Left cardiac atrium (tissue), 4 donors: ENCODE measurements at regions of chr1 and their contacts with region 1.

Region 1: DNA sequence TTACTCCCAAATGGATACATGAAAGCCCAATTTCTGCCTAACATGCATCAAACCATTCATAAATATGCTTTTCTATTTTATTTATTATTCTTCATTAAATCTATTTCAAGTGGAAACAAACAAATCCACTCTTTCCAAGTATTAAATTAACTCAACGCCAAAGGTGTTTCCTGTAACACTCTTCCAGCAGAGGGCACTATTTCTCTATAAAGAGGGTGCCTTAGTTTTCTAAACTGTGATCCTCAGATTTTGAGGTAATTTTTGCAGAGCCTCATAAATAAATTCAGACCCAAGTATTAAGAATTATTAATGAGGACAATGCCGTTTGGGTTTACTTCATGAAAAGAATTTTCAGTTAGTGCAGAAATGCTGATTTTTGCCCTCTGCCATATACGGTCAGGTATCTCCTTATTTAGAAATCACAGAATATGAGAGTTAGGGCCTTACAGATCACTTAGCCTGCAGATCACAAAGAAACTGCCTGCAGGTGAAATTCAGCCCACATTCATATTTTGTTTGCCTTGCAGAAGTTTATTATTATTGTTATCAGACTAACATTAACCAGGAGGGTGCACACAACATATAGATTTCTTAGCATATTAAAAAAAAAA is 40.1 kb upstream of the MYSM1 start:
- DNase-seq: no peak
- ATAC-seq: peak; percentile 67 to 69

Region 2: DNA sequence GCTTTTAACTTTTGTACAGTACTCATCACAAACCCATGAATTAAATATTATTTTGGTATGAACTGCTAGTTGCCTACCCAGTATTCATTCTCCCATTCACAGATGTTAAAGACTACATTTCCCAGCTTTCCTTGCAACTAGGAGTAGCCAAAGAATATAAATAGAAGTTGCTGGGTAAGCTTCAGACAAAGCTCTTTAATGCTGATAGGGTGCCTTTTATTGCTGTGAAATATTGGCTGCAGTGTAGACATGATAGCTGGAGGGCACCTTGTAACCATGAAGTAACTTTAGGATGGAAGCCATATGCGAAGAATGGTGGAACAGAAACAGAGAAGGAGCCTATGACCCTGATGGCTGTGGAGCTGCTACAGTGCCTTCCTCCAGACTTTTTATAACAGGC is 27.2 kb after region 1 on chr1:
- intact Hi-C with region 1: loop called in 1 of 2 experiments (anchors 2 kb)
- DNase-seq: no peak
- ATAC-seq: peak in 1 of 2 donors; percentile 33

Region 3: GRCh38 chr1:59699227-59699847 is 959.4 kb after region 1 on chr1:
- intact Hi-C with region 1: loop called (anchors 2 to 10 kb)
- DNase-seq: no peak
- ATAC-seq: peak; percentile 23 to 53

Region 4: GRCh38 chr1:59707178-59707791 is 967.3 kb after region 1 on chr1:
- intact Hi-C with region 1: loop called in 1 of 2 experiments (anchors 10 kb)
- DNase-seq: peak; percentile 54
- ATAC-seq: peak; percentile 86 to 96

Region 5: DNA sequence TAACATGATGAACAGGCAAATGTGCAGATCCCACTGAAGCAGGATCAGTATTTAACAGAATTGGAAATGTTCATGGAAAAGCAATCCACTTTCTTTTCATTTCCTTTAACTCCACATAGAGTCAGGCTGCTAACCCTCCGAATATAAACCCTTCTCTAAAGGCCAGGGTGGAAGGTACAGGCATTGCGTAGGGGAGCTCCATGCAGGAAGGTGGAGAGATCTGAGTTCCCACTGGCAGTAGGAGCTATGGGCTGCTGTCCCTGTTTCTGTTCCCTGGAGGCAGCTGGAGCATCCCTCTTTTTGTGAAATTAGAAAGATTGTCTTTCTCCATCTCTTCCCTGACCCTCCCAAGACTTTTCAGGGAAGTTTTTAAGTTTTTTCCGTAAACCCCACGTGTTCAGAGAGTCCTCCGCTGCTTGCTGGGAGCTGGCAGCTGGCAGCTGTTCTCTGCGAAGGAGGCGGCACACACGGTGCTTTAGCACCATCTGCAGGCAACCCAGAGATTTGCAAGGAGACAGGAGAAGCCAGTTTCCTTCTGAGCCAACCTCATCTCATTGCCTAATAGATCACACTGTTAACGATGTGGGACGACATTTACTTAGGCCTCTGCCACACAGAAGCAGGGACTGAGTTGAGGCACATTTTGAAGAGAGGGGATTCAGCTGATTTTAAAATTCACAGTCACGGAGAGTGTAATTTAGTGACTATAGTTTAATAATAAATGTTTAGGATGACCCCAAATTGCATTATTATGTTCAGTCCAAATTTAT is 1019.4 kb after region 1 on chr1:
- intact Hi-C with region 1: loop called (anchors 5 to 10 kb)
- DNase-seq: peak; percentile 83
- ATAC-seq: peak; percentile 95 to 96

Region 6: DNA sequence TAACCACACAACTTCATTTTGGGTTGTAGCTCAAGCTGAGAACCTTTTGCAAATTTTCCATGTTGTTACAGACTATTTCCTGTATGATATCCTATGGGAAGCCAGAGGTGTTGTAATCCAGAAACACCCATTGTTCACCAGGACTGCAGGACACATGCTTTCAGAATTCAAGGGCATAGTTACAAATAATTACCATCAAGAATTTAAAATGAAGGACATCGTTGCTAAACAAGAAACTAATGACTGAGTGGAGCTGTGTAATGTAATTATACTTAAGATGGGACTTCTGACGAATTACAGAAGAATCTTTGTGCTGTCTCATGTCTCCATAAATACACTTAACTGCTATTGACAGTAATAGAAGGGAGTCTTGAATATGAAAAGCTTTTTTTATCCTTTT is 1027.2 kb after region 1 on chr1:
- intact Hi-C with region 1: loop called in 1 of 2 experiments (anchors 10 kb)
- DNase-seq: no peak
- ATAC-seq: no peak